Motor neuron (in vitro differentiated cells): ENCODE measurements at regions of chr20 and their contacts with region 1.

Region 1: DNA sequence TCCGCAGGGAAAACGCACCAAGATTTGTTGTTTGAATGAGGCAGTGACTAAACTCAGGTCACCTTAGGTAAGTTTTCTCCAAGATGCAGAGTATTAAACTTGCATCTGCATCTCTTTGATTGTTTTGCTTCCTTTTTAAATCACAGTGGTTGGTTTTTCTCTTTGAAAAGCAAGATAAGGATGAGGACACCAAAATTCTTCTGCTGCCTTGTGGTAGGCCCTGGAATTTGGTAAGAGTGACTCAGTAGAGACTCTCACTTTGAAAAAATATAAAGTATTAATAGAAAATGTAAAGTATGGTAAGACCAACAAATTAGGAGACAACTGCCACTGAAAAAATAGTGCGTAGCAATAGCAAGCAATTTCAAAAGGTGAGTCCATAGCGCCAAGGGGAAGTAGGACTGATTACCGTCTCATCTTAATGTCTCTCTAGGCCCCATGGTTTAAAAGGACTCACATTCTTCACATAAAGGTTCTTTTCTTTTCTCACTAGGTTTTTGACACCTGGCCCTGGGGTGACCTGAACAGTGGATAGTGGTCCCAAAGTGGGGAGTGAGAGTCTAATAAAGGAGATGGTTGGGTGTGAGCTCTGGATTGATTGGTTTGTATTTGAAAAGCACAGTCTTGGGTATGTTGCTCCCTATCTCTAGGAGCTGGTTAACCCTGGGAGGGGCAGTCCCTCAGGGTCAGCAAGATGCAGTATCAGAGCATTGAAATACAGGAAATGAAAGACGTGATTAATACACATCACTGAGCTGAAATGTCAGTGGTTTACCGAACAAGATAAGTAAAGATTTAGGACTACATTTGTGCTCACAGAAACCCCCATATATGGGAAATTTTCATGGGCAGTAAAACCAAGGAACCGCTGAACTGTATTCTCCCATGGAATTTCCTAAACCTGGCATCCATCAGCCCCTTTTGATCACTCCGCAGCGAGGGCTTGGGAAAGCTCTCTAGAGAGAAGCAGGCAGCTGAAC is 221.2 kb downstream of the SLC24A3 start:
- ATAC-seq: no peak
- H3K4me3 ChIP-seq: no peak overlapping the region
- H3K27ac ChIP-seq: no peak overlapping the region
- H3K4me1 ChIP-seq: peaks cover 26 to 56% of the 10 kb centered on the region in 2 donors

Region 2: DNA sequence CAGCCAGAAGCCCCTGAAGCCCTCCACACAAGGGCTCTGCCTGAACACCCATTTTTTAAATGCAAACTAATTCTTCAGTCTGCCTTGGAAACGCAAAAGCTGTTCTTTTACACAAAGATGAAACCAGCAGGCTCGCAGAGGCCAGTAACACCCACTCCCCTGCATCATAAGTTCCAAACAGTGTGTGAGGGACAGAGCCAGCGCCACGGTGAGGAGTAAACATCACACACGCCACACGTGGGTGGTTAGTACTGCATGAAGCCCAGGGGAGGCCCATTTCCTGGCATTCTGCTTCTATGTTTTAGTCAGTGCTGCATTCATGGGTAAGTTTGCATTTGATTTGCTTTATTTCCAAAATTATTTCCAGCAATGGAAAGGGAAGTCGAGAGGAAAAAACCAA is 106.7 kb after region 1 on chr20:
- in situ Hi-C with region 1: loop called in 1 of 9 experiments (anchors 25 kb)
- ATAC-seq: peak in 5 of 8 experiments; percentile 67 to 99 (median 89)
- H3K4me3 ChIP-seq: no peak overlapping the region
- H3K27ac ChIP-seq: no peak overlapping the region
- H3K4me1 ChIP-seq: peaks cover 9 to 13% of the 10 kb centered on the region in 2 donors

Region 3: GRCh38 chr20:20073801-20074371 is 640.2 kb after region 1 on chr20:
- in situ Hi-C with region 1: no loop called
- ATAC-seq: peak in 6 of 8 experiments; percentile 48 to 88 (median 77)
- H3K4me3 ChIP-seq: peak overlapping the region in 2 of 5 donors; percentile 1 to 12
- H3K27ac ChIP-seq: peak overlapping the region; percentile 33 to 70
- H3K4me1 ChIP-seq: peaks cover 14 to 19% of the 10 kb centered on the region in 2 donors